ENCODE measurements at regions of chr14 and their contacts with region 1.

Region 1: GRCh38 chr14:80987235-80988032 is 32.0 kb downstream of the TSHR start:
- DNase-seq: peak; percentile 74

Region 2: GRCh38 chr14:80954687-80955299 is 32.6 kb before region 1 on chr14:
- CTCF ChIA-PET with region 1: interaction called, 14 read pairs
- POLR2A ChIA-PET with region 1: interaction called, 3 read pairs
- DNase-seq: peak; percentile 83

Region 3: DNA sequence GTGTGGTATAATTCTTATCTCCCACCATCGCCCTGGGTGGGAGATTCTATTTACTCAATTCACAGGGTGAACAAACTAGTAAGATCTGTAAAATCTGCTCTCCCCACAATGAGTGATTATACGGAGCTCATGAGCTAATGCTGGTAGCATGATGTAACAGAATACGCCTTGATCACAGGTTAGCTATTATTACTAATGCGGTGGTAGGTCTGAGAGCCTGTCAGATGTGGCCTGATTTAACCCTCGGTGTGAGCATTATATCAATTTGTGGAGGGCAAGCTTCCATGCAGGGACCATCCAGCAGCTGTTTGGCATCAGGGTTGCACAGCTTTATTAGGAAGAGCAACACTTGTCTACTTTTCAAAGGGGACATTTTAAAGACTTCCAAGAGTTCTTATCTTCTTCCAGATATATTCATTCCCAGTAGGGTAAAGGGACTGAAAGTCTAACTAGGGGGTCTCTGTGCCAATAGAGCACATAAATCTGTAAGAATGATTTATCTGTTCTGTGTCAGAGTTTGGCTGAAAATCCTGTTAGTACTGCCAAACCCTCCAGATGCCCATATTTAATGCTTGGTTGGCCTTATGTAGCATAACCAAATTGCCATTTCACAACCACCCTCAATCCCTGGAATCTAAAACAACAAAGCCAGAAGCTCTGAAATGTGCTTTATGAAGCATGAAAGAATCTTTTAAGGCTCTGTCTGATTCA is 13.3 kb before region 1 on chr14:
- CTCF ChIA-PET with region 1: interaction called, 10 read pairs
- POLR2A ChIA-PET with region 1: no interaction called
- DNase-seq: no peak

Region 4: DNA sequence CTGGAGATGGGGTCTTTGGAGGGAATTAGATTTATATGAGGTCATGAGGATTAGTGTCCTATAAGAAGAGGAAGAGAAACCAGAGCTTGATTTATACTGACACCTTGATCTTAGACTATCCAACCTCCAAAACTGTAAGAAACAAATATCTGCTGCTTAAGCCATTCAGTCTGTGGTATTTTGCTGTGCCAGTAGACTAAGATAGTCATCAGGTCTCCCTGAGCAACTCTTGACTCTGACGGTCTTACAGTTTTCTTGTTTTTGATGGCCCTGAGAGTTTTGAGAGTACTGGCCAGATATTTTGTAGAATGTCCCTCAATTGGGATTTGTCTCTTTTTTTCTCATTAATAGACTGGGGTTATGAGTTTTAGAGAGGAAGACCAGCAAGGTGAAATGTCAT is 19.7 kb after region 1 on chr14:
- CTCF ChIA-PET with region 1: no interaction called
- POLR2A ChIA-PET with region 1: no interaction called
- DNase-seq: no peak